SK-N-SH (cell line): ENCODE measurements at regions of chr19 and their contacts with region 1.

Region 1: DNA sequence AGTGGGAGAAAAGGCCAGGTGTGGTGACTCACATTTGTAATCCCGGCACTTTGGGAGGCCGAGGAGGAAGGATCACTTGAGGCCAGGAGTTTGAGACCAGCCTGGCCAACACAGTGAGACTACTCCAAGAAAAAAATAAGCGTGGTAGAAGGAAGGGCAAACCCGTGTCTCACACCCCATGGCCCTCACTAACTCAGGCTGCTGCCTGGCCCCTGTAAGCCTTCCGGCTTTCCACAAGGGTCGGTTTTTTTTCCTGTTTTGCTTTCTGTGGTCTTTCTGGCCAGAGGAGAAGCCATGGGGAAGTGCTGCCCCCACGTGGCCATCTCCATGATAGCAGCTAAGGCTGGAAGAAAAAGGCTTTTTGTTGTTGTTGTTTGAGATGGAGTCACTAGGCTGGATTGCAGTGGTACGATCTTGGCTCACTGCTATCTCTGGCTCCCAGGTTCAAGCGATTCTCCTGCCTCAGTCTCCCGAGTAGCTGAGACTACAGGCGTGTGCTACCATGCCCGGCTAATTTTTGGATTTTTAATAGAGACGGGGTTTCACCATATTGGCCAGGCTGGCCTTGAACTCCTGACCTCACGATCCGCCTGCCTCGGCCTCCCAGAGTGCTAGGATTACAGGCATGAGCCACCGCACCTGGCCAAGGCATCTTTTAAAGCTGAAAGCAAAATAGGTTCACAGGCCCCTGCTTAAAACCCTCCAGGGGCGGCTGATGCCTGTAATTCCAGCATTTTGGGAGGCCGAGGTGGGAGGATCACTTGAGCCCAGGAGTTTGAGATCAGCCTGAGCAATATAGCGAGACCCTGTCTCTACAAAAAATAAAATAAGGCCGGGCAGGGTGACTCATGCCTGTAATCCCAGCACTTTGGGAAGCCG is 7.5 kb upstream of the ARHGEF18 start:
- DNase-seq: peak; percentile 71
- H3K4me3 ChIP-seq: peak overlapping the region in 1 of 2 experiments; percentile 18; a peak in 1 of 4 replicates
- H3K27ac ChIP-seq: no peak overlapping the region
- H3K4me1 ChIP-seq: no peaks in the 10 kb centered on the region
- H3K27me3 ChIP-seq: peaks cover 21% of the 10 kb centered on the region
- CTCF ChIP-seq: peak; percentile 93
- EP300 ChIP-seq: no peak
- RAD21 ChIP-seq: peak; percentile 97

Region 2: DNA sequence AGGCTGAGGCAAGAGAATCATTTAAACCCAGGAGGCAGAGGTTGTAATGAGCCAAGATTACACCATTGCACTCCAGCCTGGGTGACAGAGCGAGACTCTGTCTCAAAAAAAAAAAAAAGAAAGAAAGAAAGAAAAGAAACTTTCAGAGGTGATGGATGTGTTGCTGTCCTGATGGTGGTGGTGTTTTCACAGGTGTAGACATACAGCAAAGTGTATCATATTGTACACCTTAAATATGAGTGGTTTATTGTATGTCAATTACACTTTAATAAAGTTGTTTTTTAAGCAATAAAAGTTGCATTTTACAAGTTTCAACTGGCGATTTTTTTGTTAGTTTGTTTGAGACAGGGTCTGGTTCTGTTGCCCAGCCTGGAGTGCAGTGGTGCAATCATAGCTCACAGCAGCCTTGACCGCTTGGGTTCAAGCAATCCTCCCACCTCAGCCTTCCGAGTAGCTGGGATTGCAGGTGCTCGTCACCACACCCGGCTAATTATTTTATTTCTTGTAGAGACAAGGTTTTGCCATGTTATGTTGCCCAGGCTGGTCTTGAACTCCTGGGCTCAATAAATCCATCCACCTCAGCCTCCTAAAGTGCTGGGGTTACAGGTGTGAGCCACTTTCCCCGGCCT is 33.5 kb before region 1 on chr19:
- CTCF ChIA-PET with region 1: interaction called, 15 read pairs
- POLR2A ChIA-PET with region 1: no interaction called
- DNase-seq: no peak
- H3K4me3 ChIP-seq: no peak overlapping the region
- H3K27ac ChIP-seq: no peak overlapping the region
- H3K4me1 ChIP-seq: no peaks in the 10 kb centered on the region
- H3K27me3 ChIP-seq: no peaks in the 10 kb centered on the region; the same call in 1 of the 2 replicates
- CTCF ChIP-seq: no peak
- EP300 ChIP-seq: no peak
- RAD21 ChIP-seq: no peak

Region 3: DNA sequence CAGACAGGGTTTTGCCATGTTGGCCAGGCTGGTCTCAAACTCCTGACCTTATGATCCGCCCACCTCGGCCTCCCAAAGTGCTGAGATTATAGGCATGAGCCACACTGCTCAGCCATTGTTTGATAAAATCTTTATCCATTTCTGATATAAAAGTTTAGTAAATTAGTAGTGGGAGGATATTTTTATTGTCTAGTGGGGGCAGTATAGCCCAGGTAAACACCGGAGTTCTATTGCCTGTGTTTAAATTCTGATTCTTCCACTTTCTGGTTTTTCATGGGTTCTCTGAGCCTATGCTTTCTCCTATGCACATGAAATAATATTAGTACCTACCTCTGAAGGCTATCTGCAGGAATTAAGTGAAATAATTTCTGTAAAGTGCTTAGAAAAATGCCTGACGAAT is 12.6 kb before region 1 on chr19:
- CTCF ChIA-PET with region 1: interaction called, 20 read pairs
- POLR2A ChIA-PET with region 1: no interaction called
- DNase-seq: no peak
- H3K4me3 ChIP-seq: no peak overlapping the region
- H3K27ac ChIP-seq: no peak overlapping the region
- H3K4me1 ChIP-seq: no peaks in the 10 kb centered on the region
- H3K27me3 ChIP-seq: peaks cover 5% of the 10 kb centered on the region; the same call in 1 of the 2 replicates
- CTCF ChIP-seq: no peak
- EP300 ChIP-seq: no peak
- RAD21 ChIP-seq: no peak

Region 4: DNA sequence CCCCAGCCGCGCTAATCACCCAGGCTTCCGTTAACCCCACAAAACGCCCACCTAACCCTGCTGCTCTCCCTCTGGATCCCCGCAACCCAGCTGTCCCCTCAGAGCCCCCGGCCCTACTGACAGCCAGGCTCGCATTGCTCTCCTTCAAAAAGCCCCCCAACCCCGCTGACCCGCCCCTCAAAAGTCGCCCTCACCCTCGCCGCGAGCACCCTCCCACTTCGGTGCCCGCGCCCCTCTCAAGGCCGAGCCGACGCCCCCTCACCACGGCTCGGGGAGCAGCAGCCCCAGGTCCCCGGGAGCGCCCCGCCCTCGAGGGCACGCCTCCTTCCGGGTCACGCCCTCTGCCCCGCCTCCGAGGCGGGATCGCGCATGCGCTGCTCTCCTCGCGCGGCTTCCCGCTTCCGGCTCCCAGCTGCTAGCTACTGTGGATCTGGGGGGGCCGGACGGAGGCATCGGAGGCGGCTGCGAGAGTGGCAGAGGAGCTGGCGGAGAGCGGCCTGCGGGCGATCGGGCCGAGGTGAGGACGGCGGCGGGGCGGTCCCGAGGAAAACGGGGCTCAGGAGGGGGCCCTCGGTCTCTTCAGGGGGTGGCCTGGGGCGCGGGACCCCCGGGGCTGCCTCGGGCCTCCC is 53.6 kb after region 1 on chr19:
- CTCF ChIA-PET with region 1: no interaction called
- POLR2A ChIA-PET with region 1: no interaction called
- DNase-seq: peak; percentile 99
- H3K4me3 ChIP-seq: peak overlapping the region; percentile 74 to 83
- H3K27ac ChIP-seq: peak overlapping the region; percentile 48 to 54; a peak in 2 of 4 replicates
- H3K4me1 ChIP-seq: peaks cover 6 to 11% of the 10 kb centered on the region in 2 experiments; a peak in 2 of 4 replicates
- H3K27me3 ChIP-seq: no peaks in the 10 kb centered on the region
- CTCF ChIP-seq: 0 out of 2 replicates have a peak, but pooled peaks have one; percentile 14
- EP300 ChIP-seq: no peak
- RAD21 ChIP-seq: no peak